Common myeloid progenitor, CD34-positive (primary cell): ENCODE measurements at regions of chr16 and their contacts with region 1.

Region 1: GRCh38 chr16:81035398-81035974 is at the start of gene ATMIN:
- DNase-seq: peak; percentile 84 to 92 (median 92)
- H3K4me3 ChIP-seq: peak within 1 kb of the TSS; percentile 74 to 93 (median 82)
- H3K27ac ChIP-seq: peak within 1 kb of the TSS in 1 of 2 experiments; percentile 66
- H3K4me1 ChIP-seq: peaks cover 0 to 17% (median 11%) of the 10 kb centered on the region in 4 experiments
- H3K27me3 ChIP-seq: no peaks in the 10 kb centered on the region

Region 2: GRCh38 chr16:81006814-81007696 is 28.4 kb before region 1 on chr16 and contains the starts of genes CENPN and CMC2:
- CTCF ChIA-PET with region 1: interaction called, 20 read pairs
- POLR2A ChIA-PET with region 1: interaction called, 6 read pairs
- DNase-seq: peak; percentile 99 to 100 (median 99)
- H3K4me3 ChIP-seq: peak within 1 kb of the TSS; percentile 89 to 97 (median 92)
- H3K27ac ChIP-seq: peak within 1 kb of the TSS; percentile 98 to 99
- H3K4me1 ChIP-seq: peaks cover 8 to 38% (median 30%) of the 10 kb centered on the region in 4 experiments
- H3K27me3 ChIP-seq: no peaks in the 10 kb centered on the region

Region 3: GRCh38 chr16:81018496-81018895 is 17.0 kb before region 1 on chr16:
- CTCF ChIA-PET with region 1: interaction called, 10 read pairs
- POLR2A ChIA-PET with region 1: no interaction called
- DNase-seq: no peak
- H3K4me3 ChIP-seq: no peak overlapping the region
- H3K27ac ChIP-seq: no peak overlapping the region
- H3K4me1 ChIP-seq: no peaks in the 10 kb centered on the region
- H3K27me3 ChIP-seq: no peaks in the 10 kb centered on the region